Endothelial cell of umbilical vein (primary cell): ENCODE measurements at regions of chr1 and their contacts with region 1.

Region 1: GRCh38 chr1:147890177-147890790 is 12.3 kb upstream of the GJA8 start:
- DNase-seq: peak; percentile 78
- H3K4me3 ChIP-seq: no peak overlapping the region
- H3K27ac ChIP-seq: no peak overlapping the region
- H3K4me1 ChIP-seq: no peaks in the 10 kb centered on the region
- H3K27me3 ChIP-seq: no peaks in the 10 kb centered on the region
- CTCF ChIP-seq: peak; percentile 86 to 89
- POLR2A ChIP-seq: no peak

Region 2: GRCh38 chr1:147273409-147274336 is 616.6 kb before region 1 on chr1:
- CTCF ChIA-PET with region 1: interaction called, 30 read pairs
- POLR2A ChIA-PET with region 1: no interaction called
- dilution Hi-C with region 1: no loop called
- intact Hi-C with region 1: loop called (anchors 1 kb)
- DNase-seq: peak; percentile 77
- H3K4me3 ChIP-seq: no peak overlapping the region
- H3K27ac ChIP-seq: peak overlapping the region; percentile 48
- H3K4me1 ChIP-seq: peaks cover 14% of the 10 kb centered on the region
- H3K27me3 ChIP-seq: no peaks in the 10 kb centered on the region
- CTCF ChIP-seq: peak; percentile 28 to 35
- POLR2A ChIP-seq: no peak

Region 3: DNA sequence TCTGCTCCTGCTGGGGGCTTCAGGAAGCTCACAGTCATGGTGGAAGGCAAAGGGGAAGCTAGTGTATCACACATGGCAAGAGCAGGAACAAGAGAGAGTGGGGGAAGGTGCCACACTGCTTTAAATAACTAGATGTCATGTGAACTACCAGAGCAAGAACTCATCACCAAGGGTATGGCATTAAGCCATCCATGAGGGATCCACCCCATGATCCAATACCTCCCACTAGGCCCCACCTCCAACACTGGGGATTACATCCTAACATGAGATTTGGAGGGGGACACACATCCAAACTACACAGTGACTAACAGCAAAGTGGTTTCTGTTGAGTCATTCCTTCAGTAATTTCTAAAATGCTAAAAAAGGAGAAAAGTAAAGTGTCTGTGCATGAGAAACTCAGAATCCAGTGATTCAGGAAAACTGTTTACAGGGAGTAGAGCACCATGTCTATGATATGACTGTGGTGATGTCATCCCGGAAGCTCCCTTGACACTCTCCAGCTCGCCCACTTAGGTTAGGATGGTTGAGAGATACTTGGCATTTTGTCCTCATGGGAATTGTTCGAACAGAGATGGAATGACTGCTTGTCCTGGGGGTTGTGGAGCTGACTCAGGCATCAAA is 597.5 kb before region 1 on chr1:
- CTCF ChIA-PET with region 1: no interaction called
- POLR2A ChIA-PET with region 1: no interaction called
- dilution Hi-C with region 1: no loop called
- intact Hi-C with region 1: no loop called
- DNase-seq: no peak
- H3K4me3 ChIP-seq: no peak overlapping the region
- H3K27ac ChIP-seq: no peak overlapping the region
- H3K4me1 ChIP-seq: no peaks in the 10 kb centered on the region
- H3K27me3 ChIP-seq: no peaks in the 10 kb centered on the region
- CTCF ChIP-seq: no peak
- POLR2A ChIP-seq: no peak

Region 4: GRCh38 chr1:147611021-147611426 is 279.3 kb before region 1 on chr1:
- CTCF ChIA-PET with region 1: no interaction called
- POLR2A ChIA-PET with region 1: no interaction called
- dilution Hi-C with region 1: no loop called
- intact Hi-C with region 1: no loop called
- DNase-seq: no peak
- H3K4me3 ChIP-seq: no peak overlapping the region
- H3K27ac ChIP-seq: no peak overlapping the region
- H3K4me1 ChIP-seq: no peaks in the 10 kb centered on the region
- H3K27me3 ChIP-seq: no peaks in the 10 kb centered on the region
- CTCF ChIP-seq: no peak
- POLR2A ChIP-seq: no peak

Region 5: GRCh38 chr1:147627435-147628110 is 262.7 kb before region 1 on chr1:
- CTCF ChIA-PET with region 1: interaction called, 16 read pairs
- POLR2A ChIA-PET with region 1: no interaction called
- dilution Hi-C with region 1: no loop called
- intact Hi-C with region 1: no loop called
- DNase-seq: peak; percentile 48
- H3K4me3 ChIP-seq: no peak overlapping the region
- H3K27ac ChIP-seq: no peak overlapping the region
- H3K4me1 ChIP-seq: peaks cover 6% of the 10 kb centered on the region
- H3K27me3 ChIP-seq: no peaks in the 10 kb centered on the region
- CTCF ChIP-seq: peak; percentile 86 to 92
- POLR2A ChIP-seq: no peak

Region 6: GRCh38 chr1:147670317-147671041 is 219.8 kb before region 1 on chr1 and contains the start of gene ACP6:
- CTCF ChIA-PET with region 1: interaction called, 12 read pairs
- POLR2A ChIA-PET with region 1: no interaction called
- dilution Hi-C with region 1: no loop called
- intact Hi-C with region 1: no loop called
- DNase-seq: peak; percentile 97
- H3K4me3 ChIP-seq: peak within 1 kb of the TSS; percentile 57 to 79 (median 76)
- H3K27ac ChIP-seq: no peak within 1 kb of the TSS
- H3K4me1 ChIP-seq: peaks cover 13% of the 10 kb centered on the region
- H3K27me3 ChIP-seq: no peaks in the 10 kb centered on the region
- CTCF ChIP-seq: no peak
- POLR2A ChIP-seq: peak; percentile 45
- total RNA-seq, gene ACP6: 9.4 and 11.1 TPM in 2 replicates

Region 7: DNA sequence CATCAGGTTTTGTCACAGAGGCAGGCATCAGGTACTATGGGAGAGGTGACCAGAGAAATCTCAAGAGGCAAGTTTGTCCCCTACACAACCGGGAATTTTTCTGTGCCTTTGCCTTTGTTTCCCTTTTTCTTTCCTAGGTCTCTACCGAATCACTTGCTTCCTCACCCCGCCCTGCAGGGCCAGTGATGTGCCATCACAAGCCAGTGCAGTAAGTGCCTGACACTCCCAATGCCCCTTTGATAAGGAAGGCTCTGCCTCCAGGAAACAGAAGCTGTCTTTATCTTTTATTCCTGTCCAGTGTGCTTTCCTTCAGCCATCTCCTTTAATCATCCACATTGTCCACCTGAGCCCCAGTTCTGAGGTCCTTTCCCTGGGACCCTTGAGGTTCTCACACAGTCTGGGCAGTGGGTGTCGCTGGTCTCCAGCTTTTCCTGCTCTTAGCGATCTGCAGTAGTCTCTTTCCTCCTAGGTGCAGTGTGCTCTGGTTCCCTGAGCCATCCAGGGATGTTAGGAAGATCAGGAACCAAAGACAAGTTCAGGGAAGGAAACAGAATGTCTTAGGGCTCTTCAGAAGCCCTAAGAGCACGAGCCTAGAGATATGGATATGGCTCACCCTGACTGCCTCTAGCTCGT is 166.5 kb before region 1 on chr1:
- CTCF ChIA-PET with region 1: interaction called, 273 read pairs
- POLR2A ChIA-PET with region 1: no interaction called
- dilution Hi-C with region 1: no loop called
- intact Hi-C with region 1: loop called (anchors 1 kb)
- DNase-seq: peak; percentile 65
- H3K4me3 ChIP-seq: no peak overlapping the region
- H3K27ac ChIP-seq: no peak overlapping the region
- H3K4me1 ChIP-seq: no peaks in the 10 kb centered on the region
- H3K27me3 ChIP-seq: peaks cover 2 to 10% of the 10 kb centered on the region in 2 experiments
- CTCF ChIP-seq: peak; percentile 66 to 79
- POLR2A ChIP-seq: no peak

Region 8: DNA sequence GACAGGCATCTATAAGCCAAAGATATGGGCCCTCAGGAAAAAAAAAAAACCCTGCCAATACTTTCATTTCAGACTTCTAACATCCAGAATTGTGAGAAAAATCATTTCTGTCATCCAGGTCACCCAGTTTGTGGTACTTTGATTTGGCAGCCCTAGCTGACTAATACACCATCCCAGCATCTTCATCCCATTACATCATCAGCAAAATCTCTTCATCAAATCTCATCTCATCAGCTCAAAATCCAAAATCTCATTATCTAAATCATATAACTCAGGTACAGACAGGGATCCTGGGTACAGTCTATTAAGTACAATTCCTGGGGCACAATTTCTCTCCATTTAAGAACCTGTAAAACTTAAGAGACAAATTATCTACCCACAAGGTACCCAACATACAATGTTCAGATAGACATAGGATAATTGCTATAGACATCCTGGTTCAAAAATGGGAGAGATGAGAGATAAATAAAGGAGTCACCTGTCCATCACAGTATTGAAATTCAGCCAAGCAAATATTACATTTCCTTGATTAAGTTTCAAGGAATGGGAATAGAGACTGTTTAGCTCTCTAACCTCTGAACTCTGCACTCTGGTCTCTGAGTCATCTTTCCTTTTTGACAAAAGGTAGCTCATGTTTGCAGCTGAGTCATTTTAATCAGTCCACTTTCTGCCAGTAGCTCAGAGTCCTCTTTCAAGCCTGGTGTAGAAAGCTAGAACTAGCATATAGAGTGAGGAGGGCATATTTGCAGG is 39.4 kb before region 1 on chr1:
- CTCF ChIA-PET with region 1: interaction called, 10 read pairs
- POLR2A ChIA-PET with region 1: no interaction called
- dilution Hi-C with region 1: no loop called
- intact Hi-C with region 1: no loop called
- DNase-seq: peak; percentile 85
- H3K4me3 ChIP-seq: no peak overlapping the region
- H3K27ac ChIP-seq: peak overlapping the region; percentile 21
- H3K4me1 ChIP-seq: peaks cover 42% of the 10 kb centered on the region
- H3K27me3 ChIP-seq: no peaks in the 10 kb centered on the region
- CTCF ChIP-seq: no peak
- POLR2A ChIP-seq: no peak